ENCODE measurements at regions of chr15 and their contacts with region 1.

Region 1: GRCh38 chr15:55829826-55830225 is 86.9 kb upstream of the PRTG start:
- DNase-seq: no peak
- H3K4me3 ChIP-seq: no peak overlapping the region
- H3K27ac ChIP-seq: no peak overlapping the region
- H3K4me1 ChIP-seq: no peaks in the 10 kb centered on the region
- H3K27me3 ChIP-seq: no peaks in the 10 kb centered on the region
- CTCF ChIP-seq: no peak
- EP300 ChIP-seq: no peak
- POLR2A ChIP-seq: no peak

Region 2: GRCh38 chr15:55654561-55655031 is 175.2 kb before region 1 on chr15:
- intact Hi-C with region 1: loop called in 1 of 4 experiments (anchors 10 kb)
- DNase-seq: no peak
- H3K4me3 ChIP-seq: no peak overlapping the region
- H3K27ac ChIP-seq: no peak overlapping the region
- H3K4me1 ChIP-seq: no peaks in the 10 kb centered on the region
- H3K27me3 ChIP-seq: no peaks in the 10 kb centered on the region
- CTCF ChIP-seq: no peak
- EP300 ChIP-seq: no peak
- POLR2A ChIP-seq: no peak